ENCODE measurements at regions of chr2 and their contacts with region 1.

Region 1: GRCh38 chr2:26469092-26469710 is 8.7 kb downstream of the OTOF start:
- DNase-seq: peak in 8 of 9 donors; percentile 10 to 61 (median 34)
- ATAC-seq: peak; percentile 40
- H3K4me3 ChIP-seq: no peak overlapping the region
- H3K4me3 Mint-ChIP-seq: no peak overlapping the region
- H3K27ac ChIP-seq: no peak overlapping the region
- H3K27ac Mint-ChIP-seq: no peak overlapping the region
- H3K4me1 ChIP-seq: no peaks in the 10 kb centered on the region
- H3K4me1 Mint-ChIP-seq: no peaks in the 10 kb centered on the region
- H3K27me3 ChIP-seq: no peaks in the 10 kb centered on the region
- H3K27me3 Mint-ChIP-seq: no peaks in the 10 kb centered on the region

Region 2: GRCh38 chr2:26235085-26235484 is 234.1 kb before region 1 on chr2:
- CTCF ChIA-PET with region 1: no interaction called
- POLR2A ChIA-PET with region 1: no interaction called
- intact Hi-C with region 1: loop called in 1 of 2 experiments (anchors 1 kb)
- DNase-seq: peak in 1 of 9 donors; percentile 17
- ATAC-seq: no peak
- H3K4me3 ChIP-seq: no peak overlapping the region
- H3K4me3 Mint-ChIP-seq: no peak overlapping the region
- H3K27ac ChIP-seq: no peak overlapping the region
- H3K27ac Mint-ChIP-seq: no peak overlapping the region
- H3K4me1 ChIP-seq: no peaks in the 10 kb centered on the region
- H3K4me1 Mint-ChIP-seq: peaks cover 6 to 15% (median 11%) of the 10 kb centered on the region in 7 donors
- H3K27me3 ChIP-seq: no peaks in the 10 kb centered on the region
- H3K27me3 Mint-ChIP-seq: no peaks in the 10 kb centered on the region

Measured in naive thymus-derived CD4-positive, alpha-beta T cell (primary cell).